Naive thymus-derived CD8-positive, alpha-beta T cell (primary cell): ENCODE measurements at regions of chr17 and their contacts with region 1.

Region 1: DNA sequence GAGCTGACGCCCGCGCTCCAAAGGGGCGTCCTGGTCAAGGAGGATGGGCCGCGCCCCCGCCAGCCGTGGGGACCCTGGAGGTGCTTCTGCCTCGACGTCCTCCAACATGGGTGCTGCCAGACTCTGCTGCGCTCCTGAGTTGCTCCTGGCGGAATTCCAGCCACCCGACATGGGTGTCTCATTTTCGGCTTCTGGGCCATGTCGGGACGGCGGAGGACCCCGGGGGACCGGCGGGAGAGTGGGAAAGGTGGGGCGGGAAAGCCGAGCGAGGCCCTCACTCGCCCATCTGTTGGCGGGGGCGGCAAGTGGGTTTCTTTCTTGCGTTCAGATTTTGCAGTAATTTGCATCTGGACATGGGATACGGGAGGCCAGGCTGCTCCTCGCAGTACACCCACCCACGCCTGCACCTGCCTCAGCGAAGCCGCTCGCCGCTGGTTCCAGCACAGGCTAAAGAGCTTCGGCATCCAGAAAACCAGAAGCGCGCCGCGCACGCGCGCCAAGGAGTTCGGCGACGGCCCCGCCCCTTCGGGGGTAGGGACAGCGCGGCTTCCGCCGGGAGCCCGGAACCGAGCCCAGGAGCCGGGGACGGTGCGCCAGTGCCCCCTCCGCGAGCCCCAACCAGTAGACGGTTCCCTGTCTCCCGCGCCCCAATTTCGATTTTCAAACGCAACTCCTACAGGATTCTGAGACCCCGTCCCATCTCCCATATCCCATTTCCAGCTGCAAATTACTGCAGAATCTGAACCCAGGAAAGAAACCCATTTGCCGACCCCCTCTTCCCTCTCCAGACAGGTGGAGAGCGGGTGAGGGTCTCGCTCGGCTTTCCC is at the start of gene ARMC7:
- DNase-seq: peak; percentile 79 to 93 (median 88)
- ATAC-seq: peak; percentile 79 to 81
- H3K4me3 Mint-ChIP-seq: peak within 1 kb of the TSS; percentile 82 to 93 (median 88)
- H3K27ac Mint-ChIP-seq: peak within 1 kb of the TSS; percentile 55 to 96 (median 92)
- H3K4me1 Mint-ChIP-seq: peaks cover 20 to 38% (median 34%) of the 10 kb centered on the region in 4 donors
- H3K27me3 Mint-ChIP-seq: no peaks in the 10 kb centered on the region
- polyA plus RNA-seq, gene ARMC7: 2.7 to 3.3 (median 2.9) TPM

Region 2: DNA sequence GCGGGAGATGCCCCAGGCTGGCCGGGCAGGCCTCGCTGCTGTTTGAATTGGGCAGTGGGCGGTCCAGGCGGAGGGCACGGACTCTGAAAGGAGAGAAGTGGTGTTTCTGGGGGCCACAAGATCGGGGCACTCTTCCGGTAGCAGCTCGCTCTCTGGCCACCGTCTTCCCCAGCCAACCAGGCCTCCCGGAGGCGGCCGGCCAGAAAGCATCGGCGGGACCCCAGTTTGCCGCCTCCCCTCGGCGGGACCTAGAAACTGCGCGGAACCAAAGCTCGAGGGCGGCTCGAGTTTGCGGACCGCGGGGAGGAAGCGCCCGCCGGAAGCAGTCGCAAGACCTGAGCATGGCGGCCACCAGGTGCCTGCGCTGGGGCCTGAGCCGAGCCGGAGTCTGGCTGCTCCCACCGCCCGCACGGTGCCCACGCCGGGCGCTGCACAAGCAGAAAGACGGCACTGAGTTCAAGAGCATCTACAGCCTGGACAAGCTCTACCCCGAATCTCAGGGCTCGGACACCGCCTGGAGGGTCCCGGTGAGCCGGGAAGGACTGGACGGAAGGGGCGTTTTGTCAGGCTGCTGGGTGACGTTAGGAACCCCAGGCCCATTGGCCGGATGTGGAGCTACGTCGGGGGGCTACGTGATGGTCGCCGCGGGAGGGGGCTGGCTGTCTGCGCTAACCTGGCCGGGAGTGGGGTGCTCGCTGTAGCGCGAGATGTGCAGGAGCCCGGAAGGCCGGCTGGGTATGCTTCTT is 97.1 kb before region 1 on chr17 and contains the start of gene MRPL58:
- POLR2A ChIA-PET with region 1: interaction called, 16 read pairs
- DNase-seq: peak; percentile 62 to 88 (median 78)
- ATAC-seq: peak; percentile 92 to 94
- H3K4me3 Mint-ChIP-seq: peak within 1 kb of the TSS; percentile 89 to 97 (median 94)
- H3K27ac Mint-ChIP-seq: peak within 1 kb of the TSS; percentile 87 to 97 (median 94)
- H3K4me1 Mint-ChIP-seq: peaks cover 21 to 36% (median 32%) of the 10 kb centered on the region in 4 donors
- H3K27me3 Mint-ChIP-seq: no peaks in the 10 kb centered on the region
- polyA plus RNA-seq, gene MRPL58: 44.9 to 58.1 (median 53.6) TPM

Region 3: DNA sequence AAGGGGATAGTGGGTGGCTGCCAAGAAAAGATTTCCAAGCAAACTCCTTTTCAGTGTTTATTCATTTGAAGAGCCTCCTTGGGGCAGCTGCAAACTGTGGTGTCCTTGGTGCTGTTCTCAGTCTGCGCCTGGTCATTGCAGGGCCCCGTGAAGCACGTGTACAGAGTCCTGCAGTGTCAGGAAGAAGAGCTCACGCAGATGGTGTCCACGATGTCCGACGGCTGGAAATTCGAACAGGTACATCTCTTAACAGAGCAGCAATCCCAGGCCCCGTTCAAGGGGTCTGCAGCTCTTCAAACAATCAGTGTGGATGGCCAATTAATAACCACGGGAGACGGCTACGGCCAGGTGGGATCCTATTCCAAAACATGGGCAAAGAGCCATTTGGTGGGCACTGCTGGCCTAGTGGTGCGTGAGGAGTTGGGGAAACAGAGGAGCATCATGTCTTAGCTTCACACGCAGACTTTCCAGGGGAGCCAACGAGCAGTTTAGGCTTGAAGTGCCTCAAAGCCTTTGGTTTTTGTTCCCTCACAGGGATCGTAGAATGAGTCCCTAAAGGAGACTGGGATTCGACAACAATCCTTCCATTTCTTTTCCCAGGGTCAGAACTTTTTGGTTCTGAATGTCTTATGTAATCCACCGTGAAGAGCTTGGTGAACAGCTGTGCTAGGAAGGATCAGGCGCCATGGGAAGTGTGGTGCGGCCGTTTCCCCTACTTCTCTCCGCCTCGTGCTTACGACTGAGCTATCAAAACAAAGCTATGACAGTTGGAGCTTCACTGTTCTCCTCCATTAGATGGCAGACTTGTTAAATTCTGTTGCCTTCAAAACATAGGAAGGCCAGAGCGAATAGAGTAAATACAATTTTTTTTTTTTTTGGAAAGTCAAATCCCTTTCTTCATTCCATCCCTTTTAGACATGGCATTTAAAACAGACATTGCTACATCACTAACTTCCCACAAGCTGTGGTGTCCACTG is 50.0 kb before region 1 on chr17:
- POLR2A ChIA-PET with region 1: interaction called, 15 read pairs
- DNase-seq: peak in 2 of 10 donors; percentile 43 to 47
- ATAC-seq: peak; percentile 82 to 84
- H3K4me3 Mint-ChIP-seq: no peak overlapping the region
- H3K27ac Mint-ChIP-seq: peak overlapping the region; percentile 44 to 84 (median 66)
- H3K4me1 Mint-ChIP-seq: peaks cover 5 to 18% (median 13%) of the 10 kb centered on the region in 4 donors
- H3K27me3 Mint-ChIP-seq: no peaks in the 10 kb centered on the region

Region 4: DNA sequence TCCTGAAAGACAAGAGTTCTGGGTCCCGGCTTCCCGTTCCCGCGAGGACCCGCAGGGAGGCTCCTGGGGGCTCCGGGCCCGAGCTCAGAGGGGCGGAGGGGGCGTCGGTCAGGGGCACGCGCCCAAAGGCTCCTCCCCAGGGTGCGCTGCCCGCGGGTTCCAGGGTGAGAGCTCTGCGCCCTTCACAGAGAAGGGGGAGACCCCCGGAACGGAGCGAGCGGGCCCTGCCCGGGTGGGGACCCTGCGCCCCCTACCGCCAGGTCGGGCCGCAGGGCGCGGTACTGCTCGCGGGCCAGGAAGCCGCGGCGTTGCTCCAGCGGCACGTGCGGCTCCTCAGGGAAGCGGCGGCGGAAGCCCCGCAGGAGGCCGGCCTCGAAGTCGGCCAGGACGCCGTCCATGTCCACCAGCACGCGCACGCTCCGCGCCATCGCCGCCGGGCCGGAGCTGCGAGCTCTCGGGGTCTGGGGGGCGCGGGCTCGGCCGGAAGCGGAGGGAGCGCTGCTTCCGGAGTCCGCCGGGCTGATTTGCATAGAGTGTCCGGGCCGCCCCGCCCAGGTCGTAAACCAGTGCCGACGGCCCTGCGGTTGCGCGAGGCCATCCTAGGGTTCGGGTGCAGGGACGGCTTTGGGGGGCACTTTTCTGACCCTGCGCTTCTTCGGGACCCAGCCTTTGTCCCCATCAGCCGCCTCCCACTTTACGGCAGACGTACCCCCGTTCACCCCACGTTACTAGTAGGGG is 21.8 kb after region 1 on chr17 and contains the start of gene NT5C:
- POLR2A ChIA-PET with region 1: interaction called, 49 read pairs
- DNase-seq: peak; percentile 38 to 78 (median 64)
- ATAC-seq: peak; percentile 83 to 86
- H3K4me3 Mint-ChIP-seq: peak within 1 kb of the TSS; percentile 83 to 94 (median 90)
- H3K27ac Mint-ChIP-seq: peak within 1 kb of the TSS; percentile 83 to 94 (median 91)
- H3K4me1 Mint-ChIP-seq: peaks cover 6 to 15% (median 11%) of the 10 kb centered on the region in 4 donors
- H3K27me3 Mint-ChIP-seq: no peaks in the 10 kb centered on the region
- polyA plus RNA-seq, gene NT5C: 46.0 to 53.6 (median 50.6) TPM

Region 5: GRCh38 chr17:75182569-75183450 is 73.2 kb after region 1 on chr17 and contains the start of gene SUMO2:
- POLR2A ChIA-PET with region 1: interaction called, 11 read pairs
- DNase-seq: peak; percentile 91 to 96 (median 94)
- ATAC-seq: peak; percentile 80 to 84
- H3K4me3 Mint-ChIP-seq: peak within 1 kb of the TSS; percentile 88 to 97 (median 92)
- H3K27ac Mint-ChIP-seq: peak within 1 kb of the TSS; percentile 89 to 99 (median 98)
- H3K4me1 Mint-ChIP-seq: peaks cover 15 to 53% (median 39%) of the 10 kb centered on the region in 4 donors
- H3K27me3 Mint-ChIP-seq: no peaks in the 10 kb centered on the region
- polyA plus RNA-seq, gene SUMO2: 293 to 381 (median 325) TPM

Region 6: DNA sequence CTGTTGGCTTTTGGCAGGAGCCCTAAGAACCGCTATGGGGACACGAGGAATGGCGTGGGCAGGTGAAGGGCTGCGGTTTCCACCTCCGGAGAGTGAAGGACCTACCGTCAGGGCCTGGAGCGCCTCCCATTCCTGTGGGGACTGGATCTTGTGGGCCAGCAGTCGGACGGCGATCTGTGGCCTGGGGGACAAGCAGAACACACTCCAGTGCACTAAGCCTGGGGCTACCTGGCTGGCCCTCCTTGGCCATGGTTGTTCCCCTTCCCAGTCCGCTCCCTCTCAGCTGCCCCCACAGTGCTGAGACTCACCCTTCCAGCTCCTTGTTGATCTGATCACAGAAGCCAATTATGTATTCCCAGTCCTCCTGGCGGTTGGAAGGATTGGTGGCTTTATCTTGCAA is 136.8 kb after region 1 on chr17:
- POLR2A ChIA-PET with region 1: no interaction called
- DNase-seq: no peak
- ATAC-seq: no peak
- H3K4me3 Mint-ChIP-seq: no peak overlapping the region
- H3K27ac Mint-ChIP-seq: peak overlapping the region in 3 of 10 donors; percentile 53 to 58 (median 57)
- H3K4me1 Mint-ChIP-seq: peaks cover 18 to 41% (median 29%) of the 10 kb centered on the region in 4 donors
- H3K27me3 Mint-ChIP-seq: no peaks in the 10 kb centered on the region

Region 7: DNA sequence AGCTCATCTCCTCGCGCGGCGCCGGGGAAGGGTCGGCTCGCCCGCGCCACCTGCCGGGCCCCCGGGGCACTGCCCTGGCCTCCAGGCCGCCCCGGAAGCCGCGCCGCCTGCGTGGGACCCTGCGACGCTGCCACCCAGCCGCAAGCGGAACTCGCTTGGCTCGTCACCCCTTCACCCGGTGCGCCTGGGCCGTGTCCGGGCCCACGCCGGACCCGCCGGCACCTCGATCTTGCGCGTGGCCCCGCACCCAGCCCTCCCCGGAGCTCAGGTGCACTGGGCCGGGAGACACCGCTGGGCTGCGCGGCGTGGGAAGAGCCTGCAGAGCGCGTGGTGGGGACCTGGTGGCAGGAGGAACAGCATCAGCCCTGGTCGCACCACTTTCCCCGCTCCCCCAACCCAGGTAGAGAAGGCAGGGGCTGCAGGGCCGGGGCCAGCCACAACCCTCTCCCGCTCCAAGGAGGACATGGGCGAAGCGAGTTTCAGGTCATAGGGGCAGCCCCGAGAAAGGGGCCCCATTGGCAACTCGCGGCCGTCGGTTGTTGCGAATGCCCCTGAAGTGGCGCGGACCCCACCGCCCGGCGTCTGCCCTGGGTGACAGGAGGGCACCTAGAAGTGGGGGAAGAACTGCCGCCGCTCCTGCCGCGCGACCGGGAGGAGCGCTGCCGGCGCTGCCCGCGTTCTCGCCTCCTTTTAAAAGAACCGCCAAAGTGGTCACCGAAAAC is 161.8 kb after region 1 on chr17:
- POLR2A ChIA-PET with region 1: interaction called, 14 read pairs
- DNase-seq: peak; percentile 79 to 92 (median 90)
- ATAC-seq: peak; percentile 83 to 88
- H3K4me3 Mint-ChIP-seq: peak overlapping the region; percentile 76 to 91 (median 84)
- H3K27ac Mint-ChIP-seq: peak overlapping the region; percentile 65 to 93 (median 90)
- H3K4me1 Mint-ChIP-seq: peaks cover 13 to 34% (median 28%) of the 10 kb centered on the region in 4 donors
- H3K27me3 Mint-ChIP-seq: no peaks in the 10 kb centered on the region